ENCODE measurements at regions of chr11 and their contacts with region 1.

Region 1: DNA sequence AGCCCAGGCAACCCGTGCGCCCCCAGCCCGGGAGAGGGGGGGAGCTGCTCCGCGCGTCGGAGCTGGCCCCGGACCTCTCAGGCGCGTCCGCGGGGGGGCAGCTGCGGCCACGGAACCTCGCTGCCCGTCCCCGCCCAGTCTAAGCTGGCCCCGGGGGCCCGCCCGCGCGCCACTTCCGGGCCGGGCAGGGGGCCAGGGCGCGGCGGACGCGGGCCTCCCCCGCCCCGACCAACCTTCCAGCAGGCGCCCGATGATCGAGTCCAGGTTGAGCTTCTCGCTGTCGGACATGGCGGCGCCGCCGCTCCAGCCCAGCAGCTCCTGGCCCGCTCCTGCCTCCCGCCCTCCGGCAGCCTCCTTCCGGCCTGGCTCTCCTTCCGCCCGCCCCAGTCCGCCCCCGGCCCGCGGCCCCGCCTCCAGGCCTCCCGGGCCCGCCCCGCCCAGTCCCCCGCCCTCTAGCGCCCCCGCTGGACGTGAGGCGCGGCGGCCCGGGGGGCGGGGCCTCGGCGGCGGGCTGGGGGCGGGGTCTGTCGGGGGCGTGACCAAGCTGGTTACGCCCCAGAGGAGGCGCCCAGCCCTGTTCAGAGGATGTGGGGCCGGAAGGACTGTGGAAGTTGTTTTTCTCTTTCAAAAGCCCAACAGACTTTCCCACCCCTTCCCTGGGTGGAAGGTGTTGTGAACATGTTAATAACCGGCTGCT is at the start of gene PPP1CA:
- DNase-seq: peak; percentile 90 to 99 (median 98)
- ATAC-seq: peak; percentile 89
- H3K4me3 ChIP-seq: peak within 1 kb of the TSS; percentile 91
- H3K27ac ChIP-seq: peak within 1 kb of the TSS; percentile 97
- H3K4me1 ChIP-seq: peaks cover 26 to 88% of the 10 kb centered on the region in 2 experiments
- H3K27me3 ChIP-seq: no peaks in the 10 kb centered on the region
- CTCF ChIP-seq: peak; percentile 37 to 69 (median 52); a peak in 5 of 6 replicates
- EP300 ChIP-seq: no peak
- POLR2A ChIP-seq: peak; percentile 84; the same call in 1 of the 2 replicates
- RAD21 ChIP-seq: peak; percentile 66 to 78
- polyA plus RNA-seq, gene PPP1CA: 18.2 to 51.4 TPM

Region 2: GRCh38 chr11:67277231-67277961 is 124.2 kb before region 1 on chr11:
- CTCF ChIA-PET with region 1: no interaction called
- POLR2A ChIA-PET with region 1: no interaction called
- in situ Hi-C with region 1: no loop called
- intact Hi-C with region 1: no loop called
- DNase-seq: peak; percentile 83 to 94 (median 86)
- ATAC-seq: peak; percentile 95
- H3K4me3 ChIP-seq: peak overlapping the region; percentile 37
- H3K27ac ChIP-seq: peak overlapping the region; percentile 95
- H3K4me1 ChIP-seq: peaks cover 27 to 86% of the 10 kb centered on the region in 2 experiments
- H3K27me3 ChIP-seq: no peaks in the 10 kb centered on the region
- CTCF ChIP-seq: no peak
- EP300 ChIP-seq: peak; percentile 77
- POLR2A ChIP-seq: peak; percentile 81
- RAD21 ChIP-seq: peak in 1 of 2 experiments; percentile 5; a peak in 1 of 4 replicates

Region 3: GRCh38 chr11:67301951-67302516 is 99.6 kb before region 1 on chr11:
- CTCF ChIA-PET with region 1: no interaction called
- POLR2A ChIA-PET with region 1: no interaction called
- in situ Hi-C with region 1: no loop called
- intact Hi-C with region 1: no loop called
- DNase-seq: peak in 1 of 4 experiments; percentile 7
- ATAC-seq: peak; percentile 32; the same call in 2 of the 3 replicates
- H3K4me3 ChIP-seq: no peak overlapping the region
- H3K27ac ChIP-seq: no peak overlapping the region
- H3K4me1 ChIP-seq: peaks cover 0 to 35% of the 10 kb centered on the region in 2 experiments; a peak in 2 of 5 replicates
- H3K27me3 ChIP-seq: no peaks in the 10 kb centered on the region
- CTCF ChIP-seq: no peak
- EP300 ChIP-seq: no peak
- POLR2A ChIP-seq: no peak
- RAD21 ChIP-seq: no peak

Region 4: DNA sequence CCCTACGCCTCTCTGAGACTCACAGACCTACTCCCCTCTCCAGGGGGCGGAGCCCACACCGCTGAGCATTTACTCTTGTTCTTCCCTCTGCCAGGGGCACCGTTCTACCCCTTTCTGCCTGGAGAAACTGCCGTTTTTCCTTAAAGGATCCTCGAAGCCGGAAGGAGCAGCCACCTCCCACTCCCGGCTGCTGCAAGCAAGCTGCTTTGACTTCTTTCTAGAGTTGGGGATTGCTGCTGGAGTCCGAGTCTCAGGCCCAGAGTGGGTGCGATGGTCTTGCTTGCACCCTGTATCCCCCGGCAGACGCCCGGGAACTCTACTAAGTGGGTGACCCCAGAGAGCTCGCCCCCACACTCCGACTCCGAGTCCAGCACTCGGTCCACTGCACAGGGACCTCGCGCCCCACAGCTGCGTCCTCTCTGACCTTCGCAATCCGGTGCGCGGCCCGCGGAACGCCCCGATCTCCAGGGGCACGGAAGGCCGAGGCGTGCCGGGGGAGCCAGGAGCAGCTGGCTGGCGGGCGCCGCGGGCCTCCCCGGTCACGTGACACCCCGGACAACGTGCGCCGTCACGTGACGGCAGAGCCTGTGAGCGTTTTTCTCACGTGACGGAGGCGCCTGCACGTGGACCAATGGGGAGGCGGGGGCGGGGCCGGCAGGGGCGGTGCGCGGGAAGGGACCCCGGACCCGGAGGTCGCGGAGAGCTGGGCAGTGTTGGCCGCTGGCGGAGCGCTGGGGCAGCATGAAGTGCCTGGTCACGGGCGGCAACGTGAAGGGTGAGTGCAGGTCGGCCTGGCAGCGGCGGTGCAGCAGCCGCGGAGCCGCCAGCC is 10.1 kb before region 1 on chr11 and contains the start of gene RAD9A:
- CTCF ChIA-PET with region 1: no interaction called
- POLR2A ChIA-PET with region 1: interaction called, 14 read pairs
- in situ Hi-C with region 1: no loop called
- intact Hi-C with region 1: no loop called
- DNase-seq: peak; percentile 97 to 98 (median 98)
- ATAC-seq: peak; percentile 83
- H3K4me3 ChIP-seq: peak within 1 kb of the TSS; percentile 73
- H3K27ac ChIP-seq: peak within 1 kb of the TSS; percentile 82
- H3K4me1 ChIP-seq: peaks cover 7 to 69% of the 10 kb centered on the region in 2 experiments; a peak in 4 of 5 replicates
- H3K27me3 ChIP-seq: no peaks in the 10 kb centered on the region
- CTCF ChIP-seq: no peak; a peak in 1 of 6 replicates
- EP300 ChIP-seq: 0 out of 2 replicates have a peak, but pooled peaks have one; percentile 24
- POLR2A ChIP-seq: peak; percentile 73
- RAD21 ChIP-seq: no peak
- polyA plus RNA-seq, gene RAD9A: 1.4 to 1.5 TPM

Region 5: GRCh38 chr11:67420646-67421420 is 19.2 kb after region 1 on chr11:
- CTCF ChIA-PET with region 1: no interaction called
- POLR2A ChIA-PET with region 1: interaction called, 10 read pairs
- in situ Hi-C with region 1: no loop called
- intact Hi-C with region 1: no loop called
- DNase-seq: peak; percentile 97 to 99 (median 99)
- ATAC-seq: peak; percentile 96
- H3K4me3 ChIP-seq: peak overlapping the region; percentile 62
- H3K27ac ChIP-seq: peak overlapping the region; percentile 94
- H3K4me1 ChIP-seq: peaks cover 6 to 69% of the 10 kb centered on the region in 2 experiments
- H3K27me3 ChIP-seq: no peaks in the 10 kb centered on the region
- CTCF ChIP-seq: 0 out of 6 replicates have a peak, but pooled peaks of 1 of the 3 experiments have one; percentile 4
- EP300 ChIP-seq: no peak
- POLR2A ChIP-seq: no peak; the same call in 1 of the 2 replicates
- RAD21 ChIP-seq: 0 out of 4 replicates have a peak, but pooled peaks of 1 of the 2 experiments have one; percentile 9

Region 6: DNA sequence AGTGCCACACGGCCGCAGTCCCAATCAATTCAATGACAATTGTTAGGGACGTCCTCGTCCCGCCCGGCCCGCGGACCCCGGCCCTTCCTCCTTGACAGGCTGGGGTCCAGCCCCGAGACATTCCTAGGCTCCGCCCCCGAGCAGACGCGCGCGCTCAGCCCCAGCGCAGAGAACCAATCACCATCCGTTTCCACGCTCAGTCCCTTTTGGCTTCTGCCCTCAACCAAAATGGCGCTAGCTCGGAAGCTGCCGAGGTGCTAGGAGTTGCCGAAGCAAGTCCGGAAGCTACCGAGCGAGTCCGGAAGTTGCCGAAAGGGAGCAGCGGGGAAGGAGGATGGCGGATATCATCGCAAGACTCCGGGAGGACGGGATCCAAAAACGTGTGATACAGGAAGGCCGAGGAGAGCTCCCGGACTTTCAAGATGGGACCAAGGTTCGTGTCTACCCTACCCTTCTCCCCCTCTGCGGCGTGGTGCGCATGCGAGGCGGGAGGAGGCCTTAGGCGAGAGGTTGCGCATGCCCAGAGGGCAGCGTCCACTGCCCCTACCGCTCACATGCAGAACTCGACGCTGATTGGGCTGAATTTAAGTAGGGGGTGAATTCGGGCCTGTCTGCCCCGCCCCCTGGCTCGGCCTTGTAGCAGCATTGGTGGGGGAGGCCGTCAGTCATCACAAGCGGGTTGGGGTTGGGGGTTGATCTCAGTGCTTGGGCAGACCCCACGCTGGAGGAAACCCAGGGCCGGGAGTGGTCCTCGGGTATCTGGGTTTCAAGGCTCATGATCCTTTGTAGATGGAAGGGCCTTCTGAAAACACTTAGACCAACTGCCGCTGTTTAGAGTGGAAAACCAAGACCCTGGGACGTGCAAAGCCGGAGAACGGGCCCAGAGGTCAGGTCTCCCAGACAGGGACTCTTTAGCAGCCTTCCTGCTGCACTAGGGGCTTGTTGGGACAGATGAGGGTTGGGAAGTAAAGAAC is 81.5 kb after region 1 on chr11 and contains the start of gene AIP:
- CTCF ChIA-PET with region 1: no interaction called
- POLR2A ChIA-PET with region 1: interaction called, 5 read pairs
- in situ Hi-C with region 1: no loop called
- intact Hi-C with region 1: loop called (anchors 5 kb)
- DNase-seq: peak; percentile 97 to 99 (median 98)
- ATAC-seq: peak; percentile 98
- H3K4me3 ChIP-seq: peak within 1 kb of the TSS; percentile 49
- H3K27ac ChIP-seq: peak within 1 kb of the TSS; percentile 73
- H3K4me1 ChIP-seq: peaks cover 30 to 49% of the 10 kb centered on the region in 2 experiments
- H3K27me3 ChIP-seq: no peaks in the 10 kb centered on the region
- CTCF ChIP-seq: 0 out of 6 replicates have a peak, but pooled peaks of 2 of the 3 experiments have one; percentile 7 to 12
- EP300 ChIP-seq: no peak
- POLR2A ChIP-seq: peak; percentile 81
- RAD21 ChIP-seq: no peak
- polyA plus RNA-seq, gene AIP: 5.2 to 16.2 TPM

Region 7: GRCh38 chr11:67583247-67584204 is 181.9 kb after region 1 on chr11 and contains the start of gene GSTP1:
- CTCF ChIA-PET with region 1: no interaction called
- POLR2A ChIA-PET with region 1: interaction called, 7 read pairs
- in situ Hi-C with region 1: no loop called
- intact Hi-C with region 1: loop called (anchors 5 kb)
- DNase-seq: peak; percentile 94 to 96 (median 94)
- ATAC-seq: peak; percentile 95
- H3K4me3 ChIP-seq: peak within 1 kb of the TSS; percentile 62
- H3K27ac ChIP-seq: peak within 1 kb of the TSS; percentile 89
- H3K4me1 ChIP-seq: peaks cover 33 to 49% of the 10 kb centered on the region in 2 experiments
- H3K27me3 ChIP-seq: no peaks in the 10 kb centered on the region
- CTCF ChIP-seq: peak; percentile 88 to 90 (median 89)
- EP300 ChIP-seq: no peak
- POLR2A ChIP-seq: peak; percentile 95
- RAD21 ChIP-seq: peak; percentile 68 to 70
- polyA plus RNA-seq, gene GSTP1: 739 to 1,204 TPM

Measured in K562 (cell line).